Activated CD4-positive, alpha-beta T cell treated with anti-CD3 and anti-CD28 coated beads, Interleukin-2, amount 10 ng/mL, durations not matched to agents 24 days and 14 days (primary cell): ENCODE measurements at regions of chr19 and their contacts with region 1.

Region 1: GRCh38 chr19:38869856-38870607 is 8.0 kb downstream of the RINL start:
- DNase-seq: peak; percentile 98
- H3K4me3 Mint-ChIP-seq: peak overlapping the region; percentile 95
- H3K27ac Mint-ChIP-seq: peak overlapping the region; percentile 89
- H3K4me1 Mint-ChIP-seq: peaks cover 27% of the 10 kb centered on the region
- H3K27me3 Mint-ChIP-seq: no peaks in the 10 kb centered on the region

Region 2: DNA sequence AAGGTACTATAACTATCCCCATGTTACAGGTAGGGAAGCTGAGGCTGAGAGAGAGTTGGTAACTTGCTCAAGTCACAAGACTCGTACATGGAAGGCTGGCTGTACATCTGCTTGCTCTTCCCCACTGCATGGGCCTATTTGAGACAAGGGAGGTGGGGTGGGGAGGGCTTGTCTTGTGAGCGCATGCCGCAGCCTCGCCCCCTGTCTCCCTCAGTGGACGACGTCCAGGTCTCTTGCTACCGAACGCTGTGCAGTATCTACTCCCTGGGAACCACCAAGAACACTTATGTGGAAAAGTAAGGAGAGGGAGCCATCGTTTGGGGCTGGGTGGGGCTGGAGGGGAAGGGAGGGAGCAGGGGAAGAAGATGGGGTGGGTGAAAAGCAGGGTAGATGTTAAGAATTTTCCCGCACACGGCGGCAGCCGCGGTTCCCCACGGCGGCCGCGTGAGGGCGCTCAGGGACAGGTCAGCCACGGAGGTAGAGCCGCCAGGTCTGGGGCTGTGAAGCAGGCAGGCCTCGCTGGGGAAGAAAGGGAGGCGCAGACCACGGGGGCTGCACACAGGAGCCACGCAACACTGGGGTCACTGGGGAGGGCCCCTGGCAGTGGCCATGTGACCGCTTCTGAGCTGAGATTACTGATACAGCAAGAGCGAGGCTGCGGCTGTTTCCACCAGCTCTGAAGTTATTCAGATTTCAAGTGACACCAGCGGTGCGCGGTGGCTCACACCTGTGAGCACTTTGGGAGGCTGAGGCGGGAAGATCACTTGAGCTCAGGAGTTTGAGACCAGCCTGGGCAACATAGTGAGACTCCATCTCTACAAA is 355.0 kb before region 1 on chr19:
- intact Hi-C with region 1: loop called (anchors 1 kb)
- DNase-seq: peak; percentile 94
- H3K4me3 Mint-ChIP-seq: peak overlapping the region; percentile 26
- H3K27ac Mint-ChIP-seq: no peak overlapping the region
- H3K4me1 Mint-ChIP-seq: peaks cover 22% of the 10 kb centered on the region
- H3K27me3 Mint-ChIP-seq: peaks cover 7% of the 10 kb centered on the region

Region 3: GRCh38 chr19:38849860-38850435 is 20.1 kb before region 1 on chr19 and contains the start of gene HNRNPL:
- intact Hi-C with region 1: loop called (anchors 1 kb)
- DNase-seq: peak; percentile 100
- H3K4me3 Mint-ChIP-seq: peak within 1 kb of the TSS; percentile 98
- H3K27ac Mint-ChIP-seq: peak within 1 kb of the TSS; percentile 100
- H3K4me1 Mint-ChIP-seq: peaks cover 39% of the 10 kb centered on the region
- H3K27me3 Mint-ChIP-seq: no peaks in the 10 kb centered on the region
- total RNA-seq, gene HNRNPL: 686 and 695 TPM in 2 replicates